ENCODE measurements at regions of chr3 and their contacts with region 1.

Region 1: DNA sequence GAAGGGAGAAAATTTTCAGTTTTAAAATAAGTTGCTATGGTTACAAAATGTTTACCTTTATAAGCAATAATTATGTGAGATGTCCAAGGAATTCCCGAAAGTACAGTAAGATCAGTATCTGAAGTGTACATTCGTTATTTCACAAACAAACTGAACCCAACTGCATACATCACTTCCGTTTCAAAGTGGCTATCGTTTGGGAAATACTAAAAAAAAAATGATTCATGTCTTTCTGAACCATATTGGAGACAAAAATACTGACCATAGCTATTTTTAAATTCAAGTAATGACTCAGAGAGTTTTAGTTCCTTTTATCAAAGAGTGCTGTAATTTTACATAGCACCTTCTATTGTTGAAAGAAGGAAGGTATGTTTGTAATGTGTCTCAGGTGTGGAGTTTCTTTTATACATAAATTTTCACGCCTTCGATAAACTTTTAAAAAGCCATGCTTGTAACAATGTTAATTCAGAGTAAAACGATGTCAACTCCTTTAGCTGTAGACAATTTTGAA is 8.0 kb upstream of the ANKRD28 start:
- DNase-seq: no peak
- H3K4me3 ChIP-seq: no peak overlapping the region
- H3K27ac ChIP-seq: no peak overlapping the region
- H3K4me1 ChIP-seq: peaks cover 2 to 6% of the 10 kb centered on the region in 2 donors
- H3K27me3 ChIP-seq: no peaks in the 10 kb centered on the region
- CTCF ChIP-seq: no peak
- POLR2A ChIP-seq: no peak

Region 2: DNA sequence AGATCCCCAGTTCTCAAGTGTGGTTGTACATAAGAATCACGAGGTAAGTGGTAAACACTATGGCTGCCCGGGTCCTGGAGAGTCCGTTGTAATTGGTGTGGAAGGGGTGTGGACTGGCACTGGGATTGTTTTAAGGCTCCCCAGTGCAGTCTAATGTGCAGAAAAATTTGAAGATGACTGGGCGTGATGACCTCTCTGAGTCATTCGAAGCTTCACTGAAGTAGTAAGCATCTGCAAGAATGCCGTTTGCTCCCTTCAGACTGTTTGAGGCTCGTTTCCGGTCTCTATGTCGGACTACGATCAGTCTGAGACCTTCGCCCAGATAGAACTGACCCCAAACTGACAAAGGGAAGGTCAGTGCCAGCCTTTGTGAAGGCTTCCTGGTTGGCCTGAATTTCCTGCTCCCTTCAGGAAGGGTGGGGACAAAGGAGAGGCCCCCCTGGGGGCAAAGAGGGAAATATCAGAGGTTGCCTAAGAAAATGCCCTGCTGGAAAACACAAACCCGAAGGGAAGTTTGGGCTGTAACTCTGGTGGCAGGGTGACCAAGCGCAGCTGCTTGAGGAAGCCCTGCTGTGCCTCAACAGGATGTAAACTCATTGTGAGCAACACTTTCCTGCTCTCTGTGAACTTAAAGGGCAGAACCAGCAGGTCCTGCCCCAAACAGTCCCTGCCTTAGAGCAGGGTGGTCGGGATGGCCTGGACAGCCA is 169.7 kb before region 1 on chr3:
- intact Hi-C with region 1: loop called (anchors 5 kb)
- DNase-seq: no peak
- H3K4me3 ChIP-seq: no peak overlapping the region
- H3K27ac ChIP-seq: peak overlapping the region in 2 of 3 donors; percentile 34 to 58
- H3K4me1 ChIP-seq: peaks cover 22 to 46% of the 10 kb centered on the region in 2 donors
- H3K27me3 ChIP-seq: no peaks in the 10 kb centered on the region
- CTCF ChIP-seq: no peak
- POLR2A ChIP-seq: no peak

Region 3: DNA sequence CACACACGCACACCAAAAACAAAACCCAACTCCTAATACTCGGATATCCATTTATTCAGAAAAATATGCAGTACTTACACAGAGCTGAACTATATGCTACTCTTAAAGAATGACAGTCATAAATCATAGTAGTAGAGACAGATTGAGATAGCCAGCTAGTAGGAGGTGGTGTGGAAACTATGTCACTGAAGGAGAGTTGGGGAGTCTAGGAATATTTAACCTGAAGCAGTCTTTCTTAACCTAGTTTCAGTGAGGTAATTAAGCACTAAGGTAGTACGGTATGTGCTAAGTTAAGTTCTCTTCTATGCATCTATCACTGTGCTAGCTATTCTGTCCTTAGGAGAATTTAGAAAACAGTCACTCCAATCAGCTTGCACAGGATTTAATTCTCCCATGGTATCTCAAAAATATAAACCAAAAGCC is 62.2 kb before region 1 on chr3:
- intact Hi-C with region 1: no loop called
- DNase-seq: no peak
- H3K4me3 ChIP-seq: no peak overlapping the region
- H3K27ac ChIP-seq: peak overlapping the region in 2 of 3 donors; percentile 42 to 51
- H3K4me1 ChIP-seq: peaks cover 0 to 7% of the 10 kb centered on the region in 2 donors
- H3K27me3 ChIP-seq: no peaks in the 10 kb centered on the region
- CTCF ChIP-seq: peak in 1 of 6 experiments; percentile 10
- POLR2A ChIP-seq: no peak

Region 4: GRCh38 chr3:15845475-15845874 is 39.7 kb after region 1 on chr3:
- intact Hi-C with region 1: no loop called
- DNase-seq: no peak
- H3K4me3 ChIP-seq: no peak overlapping the region
- H3K27ac ChIP-seq: no peak overlapping the region
- H3K4me1 ChIP-seq: no peaks in the 10 kb centered on the region
- H3K27me3 ChIP-seq: no peaks in the 10 kb centered on the region
- CTCF ChIP-seq: no peak
- POLR2A ChIP-seq: no peak

Measured in thyroid gland (tissue), 4 donors.